ENCODE measurements at regions of chr2 and their contacts with region 1.

Region 1: DNA sequence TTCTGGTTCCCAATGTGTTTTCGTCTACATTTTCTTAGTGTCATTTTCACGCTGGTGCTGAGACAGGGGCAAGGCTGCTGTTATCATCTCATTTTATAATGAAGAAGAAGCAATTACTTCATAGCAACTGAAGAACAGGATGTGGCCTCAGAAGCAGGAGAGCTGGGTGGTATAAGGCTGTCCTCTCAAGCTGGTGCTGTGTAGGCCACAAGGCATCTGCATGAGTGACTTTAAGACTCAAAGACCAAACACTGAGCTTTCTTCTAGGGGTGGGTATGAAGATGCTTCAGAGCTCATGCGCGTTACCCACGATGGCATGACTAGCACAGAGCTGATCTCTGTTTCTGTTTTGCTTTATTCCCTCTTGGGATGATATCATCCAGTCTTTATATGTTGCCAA is 7.3 kb downstream of the IL36G start:
- DNase-seq: peak in 7 of 9 donors; percentile 49 to 74 (median 59)
- ATAC-seq: peak; percentile 95
- H3K4me3 ChIP-seq: no peak overlapping the region
- H3K4me3 Mint-ChIP-seq: peak overlapping the region in 8 of 10 donors; percentile 0 to 50 (median 12)
- H3K27ac ChIP-seq: peak overlapping the region; percentile 43
- H3K27ac Mint-ChIP-seq: peak overlapping the region; percentile 46 to 87 (median 73)
- H3K4me1 ChIP-seq: peaks cover 0 to 32% of the 10 kb centered on the region in 2 donors
- H3K4me1 Mint-ChIP-seq: peaks cover 17 to 36% (median 25%) of the 10 kb centered on the region in 7 donors
- H3K27me3 ChIP-seq: no peaks in the 10 kb centered on the region
- H3K27me3 Mint-ChIP-seq: peaks cover 0 to 4% (median 0%) of the 10 kb centered on the region in 5 donors

Region 2: GRCh38 chr2:112996635-112997034 is 11.5 kb after region 1 on chr2:
- CTCF ChIA-PET with region 1: interaction called, 6 read pairs
- POLR2A ChIA-PET with region 1: interaction called, 35 read pairs
- intact Hi-C with region 1: loop called (anchors 1 kb)
- DNase-seq: peak; percentile 35 to 92 (median 90)
- ATAC-seq: peak; percentile 99
- H3K4me3 ChIP-seq: peak overlapping the region; percentile 20
- H3K4me3 Mint-ChIP-seq: peak overlapping the region; percentile 51 to 83 (median 71)
- H3K27ac ChIP-seq: peak overlapping the region; percentile 74
- H3K27ac Mint-ChIP-seq: peak overlapping the region; percentile 88 to 100 (median 97)
- H3K4me1 ChIP-seq: peaks cover 13 to 49% of the 10 kb centered on the region in 2 donors
- H3K4me1 Mint-ChIP-seq: peaks cover 29 to 73% (median 62%) of the 10 kb centered on the region in 7 donors
- H3K27me3 ChIP-seq: no peaks in the 10 kb centered on the region
- H3K27me3 Mint-ChIP-seq: peaks cover 0 to 16% (median 0%) of the 10 kb centered on the region in 5 donors

Region 3: GRCh38 chr2:113050921-113051895 is 66.1 kb after region 1 on chr2:
- CTCF ChIA-PET with region 1: interaction called, 8 read pairs
- POLR2A ChIA-PET with region 1: no interaction called
- intact Hi-C with region 1: loop called in 1 of 2 experiments (anchors 2 kb)
- DNase-seq: no peak
- ATAC-seq: no peak
- H3K4me3 ChIP-seq: no peak overlapping the region
- H3K4me3 Mint-ChIP-seq: no peak overlapping the region
- H3K27ac ChIP-seq: no peak overlapping the region
- H3K27ac Mint-ChIP-seq: no peak overlapping the region
- H3K4me1 ChIP-seq: no peaks in the 10 kb centered on the region
- H3K4me1 Mint-ChIP-seq: no peaks in the 10 kb centered on the region
- H3K27me3 ChIP-seq: no peaks in the 10 kb centered on the region
- H3K27me3 Mint-ChIP-seq: peaks cover 0 to 14% (median 0%) of the 10 kb centered on the region in 5 donors

Region 4: DNA sequence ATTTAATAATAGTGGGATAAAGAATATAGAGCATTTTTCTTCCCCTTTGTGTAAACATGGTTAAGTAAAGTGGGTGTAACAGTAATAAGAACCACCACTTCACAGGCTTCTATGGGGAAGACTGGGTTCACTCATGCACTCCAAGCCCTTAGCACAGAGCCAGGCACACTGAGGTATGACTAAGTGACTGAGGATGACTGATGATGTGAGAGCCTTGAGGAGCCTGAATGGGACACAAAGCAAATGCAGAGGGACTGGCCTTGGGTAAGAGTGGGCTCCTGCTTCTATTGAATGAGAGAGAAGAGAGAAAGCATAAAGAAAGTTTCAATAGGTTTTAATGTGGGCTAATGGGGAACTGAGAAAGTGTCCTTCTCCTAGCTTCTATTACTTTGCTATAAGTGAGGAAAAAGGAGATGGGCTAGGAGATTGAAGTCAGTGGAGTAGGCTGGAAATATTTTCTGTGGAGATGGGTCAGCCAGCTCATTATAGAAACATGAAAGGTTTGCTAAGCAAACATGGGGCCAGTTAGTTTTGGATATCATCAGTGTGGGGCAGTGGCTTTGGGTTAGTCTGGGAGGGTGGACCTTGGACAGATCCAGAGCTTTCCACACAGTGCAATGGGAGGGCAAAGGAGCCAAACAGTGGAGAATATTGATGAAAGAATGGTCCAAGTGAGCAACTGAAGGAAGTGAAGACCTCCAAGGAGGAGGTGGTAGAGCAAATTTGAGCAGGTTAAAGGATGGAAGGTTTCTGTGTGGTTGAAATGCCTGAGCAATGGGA is 103.3 kb after region 1 on chr2:
- CTCF ChIA-PET with region 1: no interaction called
- POLR2A ChIA-PET with region 1: no interaction called
- intact Hi-C with region 1: no loop called
- DNase-seq: no peak
- ATAC-seq: no peak
- H3K4me3 ChIP-seq: no peak overlapping the region
- H3K4me3 Mint-ChIP-seq: no peak overlapping the region
- H3K27ac ChIP-seq: no peak overlapping the region
- H3K27ac Mint-ChIP-seq: no peak overlapping the region
- H3K4me1 ChIP-seq: no peaks in the 10 kb centered on the region
- H3K4me1 Mint-ChIP-seq: peaks cover 0 to 5% (median 0%) of the 10 kb centered on the region in 7 donors
- H3K27me3 ChIP-seq: no peaks in the 10 kb centered on the region
- H3K27me3 Mint-ChIP-seq: no peaks in the 10 kb centered on the region

Region 5: DNA sequence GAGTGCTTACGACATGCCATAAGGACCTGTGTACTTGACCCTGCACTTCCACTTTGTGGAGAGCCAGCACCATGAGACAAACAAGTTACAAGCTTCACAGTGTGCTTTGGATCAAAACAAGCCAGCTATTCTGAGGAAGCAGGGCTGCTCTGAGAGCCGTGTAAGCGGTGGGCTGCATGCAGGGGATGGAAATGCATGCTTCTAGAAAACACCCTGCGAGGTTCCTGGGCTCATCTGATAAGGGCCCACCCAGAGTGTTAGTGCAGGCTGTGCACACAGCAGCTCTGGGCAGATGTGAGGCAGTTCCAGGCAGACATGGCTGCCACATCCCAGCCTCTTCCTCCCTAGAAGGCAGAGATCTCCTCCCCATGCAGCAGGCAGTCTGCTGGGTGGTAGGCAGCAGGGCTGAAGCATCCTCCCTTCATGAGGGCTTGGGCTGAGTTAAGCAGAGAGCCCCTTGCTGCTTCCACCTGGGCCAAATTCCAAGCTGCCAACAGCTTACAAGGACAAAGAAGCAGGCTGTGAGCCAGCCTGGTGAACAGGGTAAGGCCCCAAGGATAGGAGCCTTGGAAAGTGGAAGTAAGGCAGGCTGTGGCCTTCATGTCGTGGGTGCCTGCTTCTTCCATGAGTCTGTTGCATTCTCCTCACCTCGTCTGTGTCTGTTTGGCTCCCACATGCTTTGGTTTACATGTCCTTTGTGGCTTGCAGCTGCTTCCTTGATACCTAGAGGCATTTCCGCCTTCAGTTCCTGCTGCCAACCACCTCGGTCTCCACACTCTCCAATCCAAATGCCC is 196.4 kb after region 1 on chr2:
- CTCF ChIA-PET with region 1: no interaction called
- POLR2A ChIA-PET with region 1: no interaction called
- intact Hi-C with region 1: loop called in 1 of 2 experiments (anchors 5 kb)
- DNase-seq: peak in 2 of 9 donors; percentile 24 to 34
- ATAC-seq: peak; percentile 51
- H3K4me3 ChIP-seq: peak overlapping the region; percentile 43
- H3K4me3 Mint-ChIP-seq: peak overlapping the region; percentile 47 to 97 (median 76)
- H3K27ac ChIP-seq: peak overlapping the region; percentile 58
- H3K27ac Mint-ChIP-seq: peak overlapping the region; percentile 77 to 96 (median 93)
- H3K4me1 ChIP-seq: peaks cover 83 to 95% of the 10 kb centered on the region in 2 donors
- H3K4me1 Mint-ChIP-seq: peaks cover 79 to 98% (median 93%) of the 10 kb centered on the region in 7 donors
- H3K27me3 ChIP-seq: no peaks in the 10 kb centered on the region
- H3K27me3 Mint-ChIP-seq: no peaks in the 10 kb centered on the region

Region 6: GRCh38 chr2:113370478-113371091 is 385.5 kb after region 1 on chr2:
- CTCF ChIA-PET with region 1: no interaction called
- POLR2A ChIA-PET with region 1: no interaction called
- intact Hi-C with region 1: loop called in 1 of 2 experiments (anchors 10 kb)
- DNase-seq: peak; percentile 27 to 82 (median 68)
- ATAC-seq: peak; percentile 91
- H3K4me3 ChIP-seq: no peak overlapping the region
- H3K4me3 Mint-ChIP-seq: no peak overlapping the region
- H3K27ac ChIP-seq: no peak overlapping the region
- H3K27ac Mint-ChIP-seq: peak overlapping the region in 3 of 9 donors; percentile 1 to 90 (median 40)
- H3K4me1 ChIP-seq: no peaks in the 10 kb centered on the region
- H3K4me1 Mint-ChIP-seq: peaks cover 0 to 18% (median 6%) of the 10 kb centered on the region in 7 donors
- H3K27me3 ChIP-seq: no peaks in the 10 kb centered on the region
- H3K27me3 Mint-ChIP-seq: peaks cover 0 to 16% (median 6%) of the 10 kb centered on the region in 5 donors